ENCODE measurements at regions of chr3 and their contacts with region 1.

Region 1: DNA sequence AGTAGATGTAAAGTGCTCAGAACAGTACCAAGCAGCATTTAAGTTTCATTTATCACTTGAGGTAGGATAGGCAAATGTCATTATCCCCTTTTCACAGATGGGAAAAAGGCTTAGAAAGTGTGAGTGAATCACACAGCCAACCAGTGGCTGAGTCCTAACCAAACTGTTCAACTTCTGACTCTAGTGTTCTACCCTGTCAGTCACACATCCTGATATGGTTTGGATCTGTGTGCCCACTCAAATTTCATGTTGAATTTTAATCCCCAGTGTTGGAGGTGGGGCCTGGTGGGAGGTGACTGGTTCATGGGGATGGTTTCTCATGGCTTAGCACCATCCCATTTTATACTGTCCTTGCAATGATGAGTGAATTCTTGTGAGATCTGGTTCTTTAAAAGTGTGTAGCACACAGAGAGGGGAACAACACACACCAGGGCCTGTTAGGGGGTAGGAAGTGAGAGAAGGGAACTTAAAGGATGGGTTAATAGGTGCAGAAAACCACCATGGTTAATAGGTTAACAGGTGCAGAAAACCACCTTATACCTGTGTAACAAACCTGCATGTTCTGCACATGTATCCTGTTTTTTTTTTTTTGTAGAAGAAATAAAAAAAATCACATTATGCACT is 304.7 kb downstream of the SUCLG2 start:
- DNase-seq: no peak
- H3K4me3 Mint-ChIP-seq: no peak overlapping the region
- H3K27ac Mint-ChIP-seq: peak overlapping the region; percentile 3
- H3K4me1 Mint-ChIP-seq: peaks cover 14% of the 10 kb centered on the region
- H3K27me3 Mint-ChIP-seq: peaks cover 3% of the 10 kb centered on the region

Region 2: DNA sequence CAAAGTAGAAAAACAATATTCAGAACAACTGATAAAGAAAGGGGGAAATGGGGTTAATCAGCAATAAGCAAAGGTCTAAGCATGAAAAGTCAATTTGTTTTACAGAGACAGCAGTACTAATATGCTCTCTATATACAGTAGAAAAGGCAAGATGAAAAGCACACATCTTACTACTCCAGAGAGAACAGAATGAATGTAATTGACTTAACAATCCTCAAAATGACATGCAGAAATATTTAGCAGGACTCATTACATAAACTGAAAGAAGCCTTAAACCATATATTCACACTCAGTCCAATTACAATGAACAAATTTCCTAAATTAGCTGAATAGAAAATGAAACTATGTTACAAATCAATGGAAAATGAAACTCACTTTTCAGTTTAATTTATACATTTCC is 15.1 kb before region 1 on chr3:
- intact Hi-C with region 1: loop called (anchors 1 kb)
- DNase-seq: no peak
- H3K4me3 Mint-ChIP-seq: no peak overlapping the region
- H3K27ac Mint-ChIP-seq: no peak overlapping the region
- H3K4me1 Mint-ChIP-seq: peaks cover 6% of the 10 kb centered on the region
- H3K27me3 Mint-ChIP-seq: no peaks in the 10 kb centered on the region

Region 3: GRCh38 chr3:67719333-67719732 is 369.7 kb after region 1 on chr3:
- intact Hi-C with region 1: no loop called
- DNase-seq: no peak
- H3K4me3 Mint-ChIP-seq: no peak overlapping the region
- H3K27ac Mint-ChIP-seq: no peak overlapping the region
- H3K4me1 Mint-ChIP-seq: no peaks in the 10 kb centered on the region
- H3K27me3 Mint-ChIP-seq: no peaks in the 10 kb centered on the region